PC-9 (cell line): ENCODE measurements at regions of chr7 and their contacts with region 1.

Region 1: DNA sequence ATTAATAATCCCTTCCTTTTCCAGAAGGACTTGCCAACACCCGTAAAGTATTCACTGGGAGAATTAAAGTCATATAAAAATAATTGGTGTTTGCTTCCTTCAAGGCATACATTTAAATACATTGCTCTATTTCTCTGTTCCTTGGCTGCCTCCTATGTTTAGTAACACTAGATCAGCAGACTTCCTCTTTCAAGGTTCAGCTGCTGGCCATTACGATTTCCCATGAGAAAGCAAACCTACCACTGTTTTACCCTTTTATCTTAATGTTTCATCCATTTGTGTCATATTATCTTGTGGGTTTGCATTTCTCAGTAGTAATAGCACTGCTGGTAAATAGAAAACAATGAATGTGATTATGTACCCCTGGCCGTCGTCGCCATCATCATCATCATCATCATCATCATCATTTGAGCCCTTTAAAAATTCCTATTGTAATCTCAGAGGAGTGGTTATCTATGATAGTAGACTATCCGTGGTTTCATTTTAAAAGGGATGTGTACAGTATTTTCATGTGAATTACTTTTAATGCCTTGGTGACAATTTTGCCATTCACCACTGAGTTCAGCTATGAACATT is 313.8 kb upstream of the BMPER start:
- DNase-seq: no peak
- H3K4me3 ChIP-seq: no peak overlapping the region
- H3K27ac ChIP-seq: no peak overlapping the region
- H3K4me1 ChIP-seq: no peaks in the 10 kb centered on the region
- H3K27me3 ChIP-seq: no peaks in the 10 kb centered on the region
- CTCF ChIP-seq: no peak

Region 2: GRCh38 chr7:33143996-33144718 is 447.4 kb before region 1 on chr7:
- CTCF ChIA-PET with region 1: no interaction called
- POLR2A ChIA-PET with region 1: no interaction called
- intact Hi-C with region 1: no loop called
- DNase-seq: peak in 1 of 2 experiments; percentile 59
- H3K4me3 ChIP-seq: no peak overlapping the region
- H3K27ac ChIP-seq: no peak overlapping the region
- H3K4me1 ChIP-seq: no peaks in the 10 kb centered on the region
- H3K27me3 ChIP-seq: no peaks in the 10 kb centered on the region
- CTCF ChIP-seq: no peak

Region 3: GRCh38 chr7:33255195-33255594 is 336.4 kb before region 1 on chr7:
- CTCF ChIA-PET with region 1: no interaction called
- POLR2A ChIA-PET with region 1: interaction called, 12 read pairs
- intact Hi-C with region 1: no loop called
- DNase-seq: no peak
- H3K4me3 ChIP-seq: no peak overlapping the region
- H3K27ac ChIP-seq: no peak overlapping the region
- H3K4me1 ChIP-seq: no peaks in the 10 kb centered on the region
- H3K27me3 ChIP-seq: no peaks in the 10 kb centered on the region
- CTCF ChIP-seq: no peak

Region 4: DNA sequence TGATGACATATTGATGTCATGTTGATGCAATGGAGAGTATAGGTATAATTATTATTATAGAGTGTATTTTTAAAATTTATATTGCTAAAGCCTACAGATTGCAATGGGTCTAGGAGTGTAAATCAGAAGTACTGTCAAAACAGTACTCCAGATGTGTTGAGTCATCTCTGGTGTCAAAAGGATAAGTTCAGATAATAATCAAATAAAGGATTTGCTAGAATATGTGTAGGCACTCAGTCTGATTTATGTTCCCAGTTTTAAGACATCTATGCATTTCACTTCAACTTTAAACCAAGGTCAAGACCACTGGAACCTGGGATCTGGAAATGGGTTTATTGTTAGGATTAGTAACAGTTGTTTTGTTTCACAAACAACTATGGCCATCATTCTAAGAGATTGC is 28.6 kb before region 1 on chr7:
- CTCF ChIA-PET with region 1: no interaction called
- POLR2A ChIA-PET with region 1: no interaction called
- intact Hi-C with region 1: no loop called
- DNase-seq: no peak
- H3K4me3 ChIP-seq: no peak overlapping the region
- H3K27ac ChIP-seq: no peak overlapping the region
- H3K4me1 ChIP-seq: no peaks in the 10 kb centered on the region
- H3K27me3 ChIP-seq: no peaks in the 10 kb centered on the region
- CTCF ChIP-seq: no peak